ENCODE measurements at regions of chr17 and their contacts with region 1.

Region 1: DNA sequence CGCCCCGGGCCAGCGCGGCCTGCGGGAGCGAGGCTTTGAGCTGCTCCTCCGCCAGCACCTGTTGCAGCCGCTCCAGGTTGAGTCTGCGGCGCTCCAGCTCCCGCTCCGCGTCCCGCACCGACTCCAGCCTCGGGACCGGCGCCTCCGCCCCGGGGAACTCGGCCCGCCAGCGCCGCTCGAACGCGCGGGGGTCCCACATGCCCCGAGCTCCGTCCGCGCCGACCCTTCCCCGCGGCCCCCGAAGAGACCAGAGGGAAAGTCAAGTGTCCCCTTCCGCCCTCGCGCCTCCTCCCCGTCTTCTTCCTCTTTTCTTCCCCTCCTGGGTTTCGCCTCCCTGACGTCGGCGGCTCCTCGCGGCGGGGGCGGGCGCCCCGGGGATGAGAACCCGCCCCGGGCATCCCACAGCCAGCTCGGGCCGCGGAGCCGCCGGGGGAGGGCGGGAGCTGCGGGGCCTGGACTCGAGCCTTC is 40.8 kb upstream of the BHLHA9 start:
- DNase-seq: peak; percentile 57
- ATAC-seq: peak; percentile 79
- H3K4me3 Mint-ChIP-seq: peak overlapping the region; percentile 81
- H3K27ac Mint-ChIP-seq: no peak overlapping the region
- H3K4me1 Mint-ChIP-seq: peaks cover 19% of the 10 kb centered on the region
- H3K27me3 Mint-ChIP-seq: peaks cover 52% of the 10 kb centered on the region

Region 2: GRCh38 chr17:1039511-1040215 is 189.8 kb before region 1 on chr17:
- CTCF ChIA-PET with region 1: no interaction called
- DNase-seq: no peak
- ATAC-seq: no peak
- H3K4me3 Mint-ChIP-seq: no peak overlapping the region
- H3K27ac Mint-ChIP-seq: no peak overlapping the region
- H3K4me1 Mint-ChIP-seq: no peaks in the 10 kb centered on the region
- H3K27me3 Mint-ChIP-seq: no peaks in the 10 kb centered on the region

Region 3: GRCh38 chr17:1260086-1260769 is 30.8 kb after region 1 on chr17:
- CTCF ChIA-PET with region 1: interaction called, 24 read pairs
- DNase-seq: no peak
- ATAC-seq: no peak
- H3K4me3 Mint-ChIP-seq: no peak overlapping the region
- H3K27ac Mint-ChIP-seq: no peak overlapping the region
- H3K4me1 Mint-ChIP-seq: peaks cover 42% of the 10 kb centered on the region
- H3K27me3 Mint-ChIP-seq: peaks cover 26% of the 10 kb centered on the region

Region 4: DNA sequence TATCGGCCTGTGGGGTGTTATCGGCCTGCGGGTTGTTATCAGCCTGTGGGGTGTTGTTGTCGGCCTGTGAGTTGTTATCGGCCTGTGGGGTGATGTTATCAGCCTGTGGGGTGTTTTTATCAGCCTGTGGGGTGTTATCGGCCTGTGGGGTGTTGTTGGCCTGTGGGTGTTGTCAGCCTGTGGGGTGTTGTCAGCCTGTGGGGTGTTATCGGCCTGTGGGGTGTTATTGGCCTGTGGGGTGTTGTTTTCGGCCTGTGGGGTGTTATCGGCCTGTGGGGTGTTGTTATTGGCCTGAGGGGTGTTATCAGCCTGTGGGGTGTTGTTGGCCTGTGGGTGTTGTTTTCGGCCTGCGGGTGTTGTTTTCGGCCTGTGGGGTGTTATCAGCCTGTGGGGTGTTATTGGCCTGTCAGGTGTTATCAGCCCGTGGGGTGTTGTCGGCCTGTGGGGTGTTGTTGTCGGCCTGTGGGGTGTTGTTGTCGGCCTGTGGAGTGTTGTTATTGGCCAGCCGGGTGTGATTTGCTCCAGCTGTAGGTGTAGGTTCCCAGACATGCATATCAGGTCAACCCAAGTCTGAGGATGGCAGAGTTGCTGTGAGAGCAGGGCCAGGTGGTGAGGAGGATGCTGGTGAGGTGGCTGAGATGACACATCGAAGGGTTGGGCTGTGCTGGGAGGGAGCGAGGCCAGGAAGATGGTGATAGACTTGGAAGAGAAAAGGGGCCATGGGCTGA is 57.1 kb after region 1 on chr17:
- CTCF ChIA-PET with region 1: no interaction called
- DNase-seq: no peak
- ATAC-seq: no peak
- H3K4me3 Mint-ChIP-seq: no peak overlapping the region
- H3K27ac Mint-ChIP-seq: no peak overlapping the region
- H3K4me1 Mint-ChIP-seq: peaks cover 3% of the 10 kb centered on the region
- H3K27me3 Mint-ChIP-seq: no peaks in the 10 kb centered on the region